Activated CD4-positive, alpha-beta T cell treated with anti-CD3 and anti-CD28 coated beads for 36 hours (primary cell): ENCODE measurements at regions of chr17 and their contacts with region 1.

Region 1: DNA sequence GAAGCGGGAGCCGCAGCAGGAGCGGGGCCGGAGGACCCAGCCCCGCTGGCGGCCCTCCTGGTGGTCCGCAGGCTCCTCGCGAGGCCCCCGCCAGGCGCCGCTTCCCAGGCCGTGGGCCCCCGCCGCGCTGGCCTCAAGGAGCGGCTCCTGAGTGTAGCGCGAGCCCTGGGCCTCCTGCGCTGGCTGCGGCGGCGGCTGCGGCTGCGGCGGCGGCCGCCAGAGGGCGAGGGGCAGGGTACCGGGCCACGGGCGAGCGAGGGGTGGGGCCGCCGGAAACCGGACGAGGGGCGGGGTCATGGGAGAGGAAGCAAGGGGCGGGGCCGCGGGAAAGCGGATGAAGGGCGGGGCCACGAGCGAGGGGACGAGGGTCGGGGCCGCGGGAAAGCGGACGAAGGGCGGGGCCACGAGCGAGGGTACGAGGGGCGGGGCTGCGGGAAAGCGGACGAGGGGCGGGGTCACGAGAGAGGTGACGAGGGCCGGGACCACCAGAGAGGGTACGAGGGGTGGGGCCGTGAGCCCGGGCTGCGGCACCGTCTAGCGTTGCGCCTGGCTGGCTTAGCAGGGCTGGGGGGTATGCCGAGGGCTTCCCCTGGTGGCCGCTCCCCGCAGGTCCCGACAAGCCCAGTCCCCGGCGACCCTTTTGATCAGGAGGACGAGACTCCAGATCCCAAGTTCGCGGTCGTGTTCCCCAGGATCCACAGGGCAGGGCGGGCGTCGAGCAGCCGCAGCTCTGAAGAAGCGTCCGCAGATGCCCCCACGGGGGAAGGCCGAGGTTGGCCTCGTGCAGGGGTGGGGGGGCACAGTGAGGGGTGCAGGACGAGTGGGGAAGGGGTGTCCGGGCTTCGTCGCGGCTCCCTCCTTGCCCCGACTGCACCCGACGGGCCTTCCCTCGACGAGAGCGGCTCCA is 1.7 kb downstream of the MYO15B start:
- DNase-seq: peak; percentile 99
- ATAC-seq: peak; percentile 90
- H3K4me3 Mint-ChIP-seq: peak overlapping the region; percentile 72
- H3K27ac Mint-ChIP-seq: peak overlapping the region; percentile 42
- H3K4me1 Mint-ChIP-seq: no peaks in the 10 kb centered on the region
- H3K27me3 Mint-ChIP-seq: peaks cover 2% of the 10 kb centered on the region

Region 2: DNA sequence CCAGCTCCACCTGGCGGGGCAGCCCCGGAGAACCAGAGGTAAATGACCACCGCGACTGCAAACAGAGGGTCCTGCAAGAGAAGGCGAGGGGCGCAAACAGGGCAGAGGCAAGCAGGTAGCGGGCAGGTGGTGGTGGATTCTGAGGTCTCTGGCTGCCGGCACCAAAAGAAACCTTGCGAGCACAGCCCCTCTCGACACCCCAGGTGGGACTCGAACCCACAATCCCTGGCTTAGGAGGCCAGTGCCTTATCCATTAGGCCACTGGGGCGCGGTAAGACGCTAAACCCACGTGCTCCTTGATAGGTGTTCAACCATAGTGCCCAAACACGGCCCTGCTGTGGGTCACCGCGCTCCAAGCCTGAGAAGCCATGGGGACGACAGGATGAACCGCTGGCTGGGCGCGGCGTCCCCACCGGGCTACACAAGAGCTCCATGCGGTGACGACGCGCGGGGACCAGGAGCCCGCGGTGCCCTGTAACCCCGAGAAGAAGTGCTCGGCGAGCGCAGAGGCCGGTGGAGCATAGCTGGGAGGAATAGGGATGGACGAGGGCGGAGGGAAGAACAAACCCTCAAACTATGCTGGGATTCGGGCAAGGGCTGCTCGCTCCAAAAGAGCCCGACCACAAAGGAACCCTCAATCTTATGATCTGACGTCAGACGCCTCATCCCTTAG is 554.9 kb before region 1 on chr17:
- CTCF ChIA-PET with region 1: no interaction called
- POLR2A ChIA-PET with region 1: no interaction called
- intact Hi-C with region 1: loop called in 1 of 2 experiments (anchors 10 kb)
- DNase-seq: peak; percentile 96
- ATAC-seq: peak; percentile 65
- H3K4me3 Mint-ChIP-seq: peak overlapping the region; percentile 91
- H3K27ac Mint-ChIP-seq: peak overlapping the region; percentile 96
- H3K4me1 Mint-ChIP-seq: peaks cover 49% of the 10 kb centered on the region
- H3K27me3 Mint-ChIP-seq: no peaks in the 10 kb centered on the region

Region 3: GRCh38 chr17:75261336-75262111 is 327.7 kb before region 1 on chr17 and contains the starts of genes GGA3 and MRPS7:
- CTCF ChIA-PET with region 1: no interaction called
- POLR2A ChIA-PET with region 1: no interaction called
- intact Hi-C with region 1: loop called in 1 of 2 experiments (anchors 1 kb)
- DNase-seq: peak; percentile 98
- ATAC-seq: peak; percentile 91
- H3K4me3 Mint-ChIP-seq: peak within 1 kb of the TSS; percentile 88
- H3K27ac Mint-ChIP-seq: peak within 1 kb of the TSS; percentile 96
- H3K4me1 Mint-ChIP-seq: peaks cover 48% of the 10 kb centered on the region
- H3K27me3 Mint-ChIP-seq: no peaks in the 10 kb centered on the region
- total RNA-seq, gene GGA3: 72.9 to 76.7 TPM
- total RNA-seq, gene MRPS7: 51.4 to 63.8 TPM

Region 4: DNA sequence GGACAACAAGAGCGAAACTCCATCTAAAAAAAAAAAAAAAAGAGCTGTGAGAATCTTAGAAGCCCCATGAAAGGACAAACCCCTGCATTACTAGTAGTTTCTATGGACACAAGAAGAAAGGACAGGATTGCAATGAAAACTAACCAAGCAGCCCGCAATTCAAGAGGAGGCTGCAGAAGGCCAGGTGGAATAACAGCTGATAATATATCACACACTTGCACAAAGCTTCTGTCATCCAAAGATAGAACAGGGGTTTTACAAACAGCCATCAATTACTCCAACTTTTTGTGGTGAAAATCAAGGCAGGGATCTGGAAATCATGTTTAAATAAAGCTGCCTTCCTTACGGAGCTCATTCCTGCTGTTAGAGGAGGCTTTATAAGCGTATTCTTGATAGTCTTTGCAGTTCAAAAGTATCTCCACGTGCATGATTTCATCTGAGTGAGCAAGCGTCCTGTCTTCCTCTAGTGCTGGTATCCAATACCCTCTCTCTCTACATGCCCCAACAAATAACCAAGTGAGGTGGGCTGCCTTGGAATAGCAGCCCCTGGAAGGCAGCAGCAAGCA is 156.0 kb before region 1 on chr17:
- CTCF ChIA-PET with region 1: no interaction called
- POLR2A ChIA-PET with region 1: no interaction called
- intact Hi-C with region 1: no loop called
- DNase-seq: no peak
- ATAC-seq: no peak
- H3K4me3 Mint-ChIP-seq: no peak overlapping the region
- H3K27ac Mint-ChIP-seq: no peak overlapping the region
- H3K4me1 Mint-ChIP-seq: peaks cover 11% of the 10 kb centered on the region
- H3K27me3 Mint-ChIP-seq: peaks cover 5% of the 10 kb centered on the region

Region 5: GRCh38 chr17:75456417-75457046 is 132.7 kb before region 1 on chr17 and contains the start of gene TMEM94:
- CTCF ChIA-PET with region 1: interaction called, 4 read pairs
- POLR2A ChIA-PET with region 1: no interaction called
- intact Hi-C with region 1: loop called in 1 of 2 experiments (anchors 1 kb)
- DNase-seq: peak; percentile 95
- ATAC-seq: peak; percentile 99
- H3K4me3 Mint-ChIP-seq: peak within 1 kb of the TSS; percentile 89
- H3K27ac Mint-ChIP-seq: peak within 1 kb of the TSS; percentile 92
- H3K4me1 Mint-ChIP-seq: peaks cover 24% of the 10 kb centered on the region
- H3K27me3 Mint-ChIP-seq: no peaks in the 10 kb centered on the region
- total RNA-seq, gene TMEM94: 51.4 to 62.5 TPM

Region 6: GRCh38 chr17:75524953-75525719 is 64.1 kb before region 1 on chr17 and contains the start of gene LLGL2:
- CTCF ChIA-PET with region 1: no interaction called
- POLR2A ChIA-PET with region 1: no interaction called
- intact Hi-C with region 1: loop called (anchors 1 to 2 kb)
- DNase-seq: peak; percentile 88
- ATAC-seq: peak; percentile 89
- H3K4me3 Mint-ChIP-seq: peak within 1 kb of the TSS; percentile 62
- H3K27ac Mint-ChIP-seq: no peak within 1 kb of the TSS
- H3K4me1 Mint-ChIP-seq: peaks cover 10% of the 10 kb centered on the region
- H3K27me3 Mint-ChIP-seq: no peaks in the 10 kb centered on the region
- total RNA-seq, gene LLGL2: 7.1 to 9.6 TPM

Region 7: GRCh38 chr17:75667021-75667790 is 77.9 kb after region 1 on chr17 and contains the starts of genes RECQL5 and SAP30BP:
- CTCF ChIA-PET with region 1: no interaction called
- POLR2A ChIA-PET with region 1: no interaction called
- intact Hi-C with region 1: loop called in 1 of 2 experiments (anchors 1 kb)
- DNase-seq: peak; percentile 99
- ATAC-seq: peak; percentile 100
- H3K4me3 Mint-ChIP-seq: no peak within 1 kb of the TSS
- H3K27ac Mint-ChIP-seq: no peak within 1 kb of the TSS
- H3K4me1 Mint-ChIP-seq: peaks cover 34% of the 10 kb centered on the region
- H3K27me3 Mint-ChIP-seq: no peaks in the 10 kb centered on the region
- total RNA-seq, gene RECQL5: 36.4 to 40.5 TPM
- total RNA-seq, gene SAP30BP: 87.8 to 100.0 TPM

Region 8: GRCh38 chr17:75904749-75905521 is 315.7 kb after region 1 on chr17 and contains the start of gene MRPL38:
- CTCF ChIA-PET with region 1: no interaction called
- POLR2A ChIA-PET with region 1: no interaction called
- intact Hi-C with region 1: loop called in 1 of 2 experiments (anchors 5 kb)
- DNase-seq: peak; percentile 97
- ATAC-seq: peak; percentile 99
- H3K4me3 Mint-ChIP-seq: peak within 1 kb of the TSS; percentile 86
- H3K27ac Mint-ChIP-seq: peak within 1 kb of the TSS; percentile 89
- H3K4me1 Mint-ChIP-seq: peaks cover 5% of the 10 kb centered on the region
- H3K27me3 Mint-ChIP-seq: no peaks in the 10 kb centered on the region
- total RNA-seq, gene MRPL38: 98.0 to 115 TPM